ENCODE measurements at regions of chr18 and their contacts with region 1.

Region 1: DNA sequence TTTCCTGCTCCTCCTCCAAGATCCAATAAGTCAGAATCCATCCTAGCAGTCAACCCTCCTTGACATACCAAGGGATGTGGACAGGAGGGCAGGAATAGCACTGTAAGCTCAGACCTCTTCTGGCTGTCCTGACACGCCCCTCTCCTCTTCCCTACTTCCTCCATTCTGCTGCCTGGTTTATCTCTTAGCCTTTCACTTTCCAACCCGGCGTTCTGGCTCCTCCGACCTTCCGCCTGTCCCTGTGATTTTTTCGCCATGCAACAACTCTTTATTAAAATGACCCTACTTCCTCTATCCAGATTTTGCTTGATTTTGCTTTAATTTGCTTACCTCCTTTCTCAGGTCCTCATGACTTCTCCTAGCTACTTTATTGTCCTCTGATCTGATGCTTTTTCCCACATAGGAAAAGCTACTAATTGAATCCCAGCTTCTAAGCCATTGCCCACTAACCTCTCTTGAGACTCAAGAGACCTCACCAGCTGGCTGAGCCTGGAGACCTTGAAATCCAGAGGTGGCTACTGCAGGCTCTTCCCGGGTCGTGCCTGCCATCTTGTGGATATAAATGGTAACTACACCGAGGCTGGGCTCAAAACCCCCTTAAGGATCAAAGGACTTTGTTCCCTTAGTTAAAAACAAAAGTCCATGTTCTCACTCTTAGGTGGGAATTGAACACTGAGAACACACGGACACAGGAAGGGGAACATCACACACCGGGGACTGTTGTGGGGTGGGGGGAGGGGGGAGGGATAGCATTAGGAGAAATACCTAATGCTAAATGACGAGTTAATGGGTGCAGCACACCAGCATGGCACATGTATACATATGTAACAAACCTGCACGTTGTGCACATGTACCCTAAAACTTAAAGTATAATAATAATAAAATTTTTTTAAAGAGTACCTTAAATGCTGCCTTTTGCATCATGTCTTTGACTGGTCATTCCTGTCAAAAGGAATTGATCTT is 139.4 kb downstream of the AKAIN1 start:
- DNase-seq: no peak
- H3K4me3 ChIP-seq: no peak overlapping the region
- H3K27ac ChIP-seq: no peak overlapping the region
- H3K4me1 ChIP-seq: no peaks in the 10 kb centered on the region
- H3K27me3 ChIP-seq: no peaks in the 10 kb centered on the region
- CTCF ChIP-seq: peak; percentile 39 to 73 (median 71)
- POLR2A ChIP-seq: no peak

Region 2: GRCh38 chr18:4106407-4107033 is 951.1 kb before region 1 on chr18:
- intact Hi-C with region 1: loop called (anchors 10 kb)
- DNase-seq: no peak
- H3K4me3 ChIP-seq: peak overlapping the region in 3 of 4 donors; percentile 5 to 31 (median 10)
- H3K27ac ChIP-seq: no peak overlapping the region
- H3K4me1 ChIP-seq: no peaks in the 10 kb centered on the region
- H3K27me3 ChIP-seq: no peaks in the 10 kb centered on the region
- CTCF ChIP-seq: peak; percentile 33 to 83 (median 78)
- POLR2A ChIP-seq: no peak

Region 3: GRCh38 chr18:5159080-5159479 is 101.4 kb after region 1 on chr18:
- intact Hi-C with region 1: no loop called
- DNase-seq: no peak
- H3K4me3 ChIP-seq: no peak overlapping the region
- H3K27ac ChIP-seq: no peak overlapping the region
- H3K4me1 ChIP-seq: no peaks in the 10 kb centered on the region
- H3K27me3 ChIP-seq: no peaks in the 10 kb centered on the region
- CTCF ChIP-seq: no peak
- POLR2A ChIP-seq: no peak

Measured in esophagus squamous epithelium (tissue), 5 donors.